ENCODE measurements at regions of chr21 and their contacts with region 1.

Region 1: DNA sequence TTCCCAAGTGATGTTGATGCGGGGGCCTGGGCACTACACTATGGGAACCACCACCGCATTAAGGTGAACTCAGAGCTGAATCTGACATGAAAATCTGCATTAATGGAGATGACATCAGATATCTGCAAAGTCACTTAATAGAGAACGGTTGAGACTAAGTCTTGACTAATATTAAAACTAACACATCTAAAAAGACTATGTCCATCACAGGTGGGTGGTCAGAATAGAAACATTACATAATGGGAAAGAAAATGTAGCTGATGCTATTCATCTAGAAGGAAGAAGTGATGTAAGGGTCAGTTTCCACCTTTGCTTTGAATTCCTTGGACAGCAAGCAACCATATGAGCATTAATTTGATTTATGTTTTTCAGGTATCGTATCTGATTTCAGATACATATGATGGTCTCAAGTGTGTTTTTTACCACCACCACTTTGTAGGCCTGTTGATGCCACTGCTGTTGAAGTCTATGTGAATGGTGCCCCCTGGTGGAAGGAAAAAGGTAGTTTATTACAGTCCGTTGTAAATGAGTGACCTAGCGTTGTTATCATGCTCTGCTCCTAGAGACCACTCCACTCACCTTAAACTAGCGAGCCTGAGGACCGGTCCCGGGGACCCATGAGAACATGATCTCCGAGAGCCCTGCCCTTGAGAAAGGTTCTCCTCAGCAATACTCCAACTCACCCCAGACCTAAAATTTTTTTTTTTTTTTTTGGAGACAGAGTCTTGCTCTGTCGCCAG is 73.5 kb downstream of the BACH1 start:
- DNase-seq: peak in 12 of 14 experiments; percentile 12 to 86 (median 39)
- ATAC-seq: peak; percentile 76
- H3K4me3 ChIP-seq: no peak overlapping the region
- H3K4me3 Mint-ChIP-seq: no peak overlapping the region
- H3K27ac ChIP-seq: no peak overlapping the region
- H3K27ac Mint-ChIP-seq: no peak overlapping the region
- H3K4me1 ChIP-seq: peaks cover 9% of the 10 kb centered on the region
- H3K4me1 Mint-ChIP-seq: peaks cover 15% of the 10 kb centered on the region
- H3K27me3 ChIP-seq: no peaks in the 10 kb centered on the region
- H3K27me3 Mint-ChIP-seq: no peaks in the 10 kb centered on the region
- CTCF ChIP-seq: peak; percentile 83

Region 2: GRCh38 chr21:28636988-28637691 is 735.1 kb before region 1 on chr21:
- CTCF ChIA-PET with region 1: no interaction called
- POLR2A ChIA-PET with region 1: no interaction called
- intact Hi-C with region 1: no loop called
- DNase-seq: no peak
- ATAC-seq: no peak
- H3K4me3 ChIP-seq: no peak overlapping the region
- H3K4me3 Mint-ChIP-seq: no peak overlapping the region
- H3K27ac ChIP-seq: no peak overlapping the region
- H3K27ac Mint-ChIP-seq: no peak overlapping the region
- H3K4me1 ChIP-seq: no peaks in the 10 kb centered on the region
- H3K4me1 Mint-ChIP-seq: no peaks in the 10 kb centered on the region
- H3K27me3 ChIP-seq: no peaks in the 10 kb centered on the region
- H3K27me3 Mint-ChIP-seq: no peaks in the 10 kb centered on the region
- CTCF ChIP-seq: no peak

Region 3: GRCh38 chr21:29091032-29091431 is 281.2 kb before region 1 on chr21:
- CTCF ChIA-PET with region 1: interaction called, 7 read pairs
- POLR2A ChIA-PET with region 1: no interaction called
- intact Hi-C with region 1: loop called (anchors 1 kb)
- DNase-seq: no peak
- ATAC-seq: no peak
- H3K4me3 ChIP-seq: no peak overlapping the region
- H3K4me3 Mint-ChIP-seq: no peak overlapping the region
- H3K27ac ChIP-seq: no peak overlapping the region
- H3K27ac Mint-ChIP-seq: no peak overlapping the region
- H3K4me1 ChIP-seq: no peaks in the 10 kb centered on the region
- H3K4me1 Mint-ChIP-seq: no peaks in the 10 kb centered on the region
- H3K27me3 ChIP-seq: no peaks in the 10 kb centered on the region
- H3K27me3 Mint-ChIP-seq: no peaks in the 10 kb centered on the region
- CTCF ChIP-seq: no peak

Region 4: DNA sequence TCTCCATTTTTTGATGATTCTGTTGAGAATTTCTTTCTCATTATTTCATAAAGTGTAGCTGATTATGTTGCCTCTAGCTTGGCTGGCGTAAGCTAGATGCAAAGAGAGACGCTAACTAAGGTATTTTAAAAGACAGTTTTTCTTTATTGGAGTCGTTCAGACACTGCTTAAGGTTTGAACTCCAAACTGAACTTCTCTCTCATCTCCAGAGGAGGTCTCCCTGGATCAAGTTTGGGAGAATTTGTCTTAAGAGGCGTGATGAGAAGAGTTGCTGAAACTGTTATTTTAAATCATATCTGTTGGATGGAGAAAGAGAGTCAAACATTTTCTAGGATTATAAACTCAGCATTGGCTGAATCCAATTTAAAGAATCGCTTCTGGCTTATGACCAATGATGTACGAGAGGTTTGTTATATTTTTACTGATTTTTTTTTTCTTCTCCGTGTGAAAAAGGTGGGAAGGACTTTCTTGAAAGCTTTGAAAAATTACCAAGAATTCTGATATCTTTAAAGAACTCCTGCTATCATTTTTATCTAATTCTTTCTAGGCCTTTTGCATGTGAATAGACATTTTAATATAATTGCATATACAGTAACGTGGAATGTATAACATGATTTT is 207.8 kb before region 1 on chr21:
- CTCF ChIA-PET with region 1: no interaction called
- POLR2A ChIA-PET with region 1: no interaction called
- intact Hi-C with region 1: loop called in 1 of 2 experiments (anchors 5 kb)
- DNase-seq: peak in 2 of 14 experiments; percentile 32 to 36
- ATAC-seq: no peak
- H3K4me3 ChIP-seq: no peak overlapping the region
- H3K4me3 Mint-ChIP-seq: no peak overlapping the region
- H3K27ac ChIP-seq: no peak overlapping the region
- H3K27ac Mint-ChIP-seq: no peak overlapping the region
- H3K4me1 ChIP-seq: no peaks in the 10 kb centered on the region
- H3K4me1 Mint-ChIP-seq: no peaks in the 10 kb centered on the region
- H3K27me3 ChIP-seq: no peaks in the 10 kb centered on the region
- H3K27me3 Mint-ChIP-seq: no peaks in the 10 kb centered on the region
- CTCF ChIP-seq: no peak

Region 5: DNA sequence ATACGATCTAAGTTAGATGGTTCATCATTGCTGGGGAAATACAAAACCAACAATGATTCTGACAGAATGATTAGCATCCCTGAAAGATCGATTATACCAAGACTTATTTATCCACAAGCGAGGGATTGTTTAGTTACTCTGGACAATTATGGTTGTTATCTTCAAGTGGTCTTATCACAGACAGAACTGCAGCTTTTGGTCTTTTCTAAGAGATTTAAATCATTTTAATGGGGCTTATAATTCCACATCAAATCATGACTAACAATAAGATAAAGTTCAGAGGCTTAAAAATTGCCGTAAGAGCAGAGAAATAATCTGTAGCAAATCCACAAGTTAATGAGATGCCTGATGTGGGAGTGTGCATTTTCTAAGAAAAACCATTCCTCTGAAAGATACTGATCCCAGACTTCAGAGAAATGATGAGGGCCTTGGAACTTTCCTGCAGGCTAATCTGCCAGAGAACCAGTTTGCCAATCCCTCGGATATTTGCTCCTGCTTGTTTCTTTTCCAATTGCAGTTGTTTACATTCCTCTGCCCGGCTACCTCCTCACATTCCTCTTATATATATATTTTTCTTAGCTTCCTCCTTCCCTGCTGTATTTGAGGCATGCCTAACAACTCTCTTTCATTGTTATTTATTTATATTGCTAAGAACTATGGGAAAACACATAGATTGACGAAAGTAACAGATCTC is 61.3 kb after region 1 on chr21:
- CTCF ChIA-PET with region 1: no interaction called
- POLR2A ChIA-PET with region 1: no interaction called
- intact Hi-C with region 1: no loop called
- DNase-seq: no peak
- ATAC-seq: no peak
- H3K4me3 ChIP-seq: no peak overlapping the region
- H3K4me3 Mint-ChIP-seq: no peak overlapping the region
- H3K27ac ChIP-seq: no peak overlapping the region
- H3K27ac Mint-ChIP-seq: peak overlapping the region; percentile 35
- H3K4me1 ChIP-seq: peaks cover 16% of the 10 kb centered on the region
- H3K4me1 Mint-ChIP-seq: peaks cover 45% of the 10 kb centered on the region
- H3K27me3 ChIP-seq: no peaks in the 10 kb centered on the region
- H3K27me3 Mint-ChIP-seq: no peaks in the 10 kb centered on the region
- CTCF ChIP-seq: no peak

Region 6: DNA sequence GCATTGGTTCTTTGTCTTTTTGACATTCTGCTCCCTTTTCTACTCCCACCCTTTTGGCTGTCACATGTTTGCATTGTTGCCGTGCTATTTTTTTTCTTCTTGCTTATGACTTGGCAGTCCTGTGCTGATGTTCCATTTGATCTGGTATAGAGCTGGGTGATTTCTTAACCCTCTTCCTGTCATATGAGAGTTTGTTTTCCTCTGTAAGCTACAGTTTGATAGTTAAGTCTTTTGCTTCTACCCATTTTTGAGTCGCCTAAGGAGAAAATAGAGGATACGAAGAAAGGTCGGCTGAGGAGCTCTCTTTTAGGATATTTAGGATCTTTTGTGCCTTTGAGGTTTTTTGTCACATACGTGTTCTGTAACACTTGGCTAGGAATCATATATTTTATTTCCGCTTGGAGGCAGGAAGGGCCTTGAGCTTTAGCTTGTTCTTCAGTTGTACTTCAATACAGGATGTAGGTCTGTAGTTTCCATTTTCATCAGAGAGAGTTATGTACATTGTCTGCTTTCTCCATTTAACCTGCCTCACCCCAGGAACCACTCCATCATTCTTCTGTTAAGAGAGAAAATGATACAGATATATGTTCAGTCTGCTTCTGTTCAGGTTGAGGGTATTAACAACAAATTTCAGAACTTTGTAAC is 77.2 kb after region 1 on chr21:
- CTCF ChIA-PET with region 1: no interaction called
- POLR2A ChIA-PET with region 1: interaction called, 26 read pairs
- intact Hi-C with region 1: no loop called
- DNase-seq: peak in 5 of 14 experiments; percentile 11 to 87 (median 63)
- ATAC-seq: peak; percentile 86
- H3K4me3 ChIP-seq: peak overlapping the region; percentile 1
- H3K4me3 Mint-ChIP-seq: peak overlapping the region; percentile 39
- H3K27ac ChIP-seq: peak overlapping the region; percentile 56 to 67
- H3K27ac Mint-ChIP-seq: peak overlapping the region; percentile 94
- H3K4me1 ChIP-seq: peaks cover 14% of the 10 kb centered on the region
- H3K4me1 Mint-ChIP-seq: peaks cover 40% of the 10 kb centered on the region
- H3K27me3 ChIP-seq: no peaks in the 10 kb centered on the region
- H3K27me3 Mint-ChIP-seq: no peaks in the 10 kb centered on the region
- CTCF ChIP-seq: peak; percentile 15

Region 7: DNA sequence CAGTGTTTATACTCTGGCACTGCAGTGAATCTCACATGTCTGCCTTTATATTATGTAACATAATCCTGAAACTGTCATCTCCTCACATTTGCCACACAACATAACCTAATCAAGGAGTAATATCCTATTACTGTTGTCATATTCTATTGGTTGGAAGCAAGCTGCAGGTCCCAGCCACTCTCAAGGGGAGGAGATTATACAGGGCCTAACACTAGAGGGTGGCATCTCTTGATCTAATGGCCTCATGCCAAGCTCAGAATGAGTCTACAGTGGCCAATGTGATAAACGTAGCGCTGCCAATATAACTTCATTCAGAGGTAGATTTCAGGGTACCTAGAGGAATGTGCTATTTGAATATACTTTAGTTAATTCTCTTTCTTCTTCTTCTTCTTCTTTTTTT is 93.3 kb after region 1 on chr21:
- CTCF ChIA-PET with region 1: no interaction called
- POLR2A ChIA-PET with region 1: no interaction called
- intact Hi-C with region 1: loop called in 1 of 2 experiments (anchors 5 kb)
- DNase-seq: no peak
- ATAC-seq: no peak
- H3K4me3 ChIP-seq: no peak overlapping the region
- H3K4me3 Mint-ChIP-seq: no peak overlapping the region
- H3K27ac ChIP-seq: no peak overlapping the region
- H3K27ac Mint-ChIP-seq: no peak overlapping the region
- H3K4me1 ChIP-seq: no peaks in the 10 kb centered on the region
- H3K4me1 Mint-ChIP-seq: peaks cover 3% of the 10 kb centered on the region
- H3K27me3 ChIP-seq: no peaks in the 10 kb centered on the region
- H3K27me3 Mint-ChIP-seq: no peaks in the 10 kb centered on the region
- CTCF ChIP-seq: no peak